PC-9 (cell line): ENCODE measurements at regions of chrX and their contacts with region 1.

Region 1: GRCh38 chrX:47233337-47234113 is 716 bp downstream of the USP11 start:
- DNase-seq: peak; percentile 83 to 85
- H3K4me3 ChIP-seq: peak overlapping the region; percentile 62
- H3K27ac ChIP-seq: peak overlapping the region; percentile 96
- H3K4me1 ChIP-seq: no peaks in the 10 kb centered on the region
- H3K27me3 ChIP-seq: no peaks in the 10 kb centered on the region
- CTCF ChIP-seq: no peak

Region 2: GRCh38 chrX:46029777-46030176 is 1203.7 kb before region 1 on chrX:
- CTCF ChIA-PET with region 1: no interaction called
- POLR2A ChIA-PET with region 1: no interaction called
- intact Hi-C with region 1: no loop called
- DNase-seq: peak in 1 of 2 experiments; percentile 35
- H3K4me3 ChIP-seq: no peak overlapping the region
- H3K27ac ChIP-seq: no peak overlapping the region
- H3K4me1 ChIP-seq: no peaks in the 10 kb centered on the region
- H3K27me3 ChIP-seq: no peaks in the 10 kb centered on the region
- CTCF ChIP-seq: no peak

Region 3: DNA sequence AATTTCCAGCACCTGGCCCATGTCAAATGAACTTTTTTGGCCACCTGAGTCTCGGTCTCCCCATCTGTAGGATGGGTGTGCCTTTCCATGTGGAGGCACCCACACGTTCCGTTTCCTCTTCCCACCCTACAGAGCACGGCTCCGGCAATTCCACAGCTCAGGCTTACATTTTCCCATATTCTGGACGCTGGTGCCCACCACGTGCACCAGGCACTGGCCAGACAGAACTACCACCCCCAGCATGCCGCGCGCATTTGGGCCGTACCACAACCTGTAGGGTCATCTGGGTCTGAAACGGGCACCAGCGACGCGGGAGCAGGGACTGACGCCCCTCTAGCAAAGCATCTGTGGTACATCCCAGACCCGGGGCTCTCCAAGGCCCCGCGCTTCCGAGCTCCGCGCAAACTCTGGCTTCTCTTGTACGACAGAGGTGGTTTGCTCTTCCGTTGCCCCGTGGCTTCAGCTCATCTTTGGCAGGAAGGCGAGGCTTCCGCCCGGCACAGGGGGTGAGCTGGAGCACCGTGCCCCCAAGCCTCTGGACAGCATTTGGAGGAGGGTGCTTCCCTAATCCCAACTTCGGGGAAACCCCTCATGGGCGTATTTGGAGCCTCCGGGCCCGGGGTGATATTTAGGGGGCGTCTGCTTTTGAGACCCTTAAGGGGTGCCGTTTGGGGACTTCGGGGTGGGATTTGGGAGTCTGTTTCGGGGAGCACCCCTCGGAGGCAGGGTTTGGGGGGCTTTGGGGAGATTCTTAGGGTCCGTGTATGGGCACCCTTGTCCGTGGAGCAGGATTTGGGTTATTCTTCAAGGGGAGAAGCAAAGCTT is 42.9 kb before region 1 on chrX:
- CTCF ChIA-PET with region 1: no interaction called
- POLR2A ChIA-PET with region 1: no interaction called
- intact Hi-C with region 1: no loop called
- DNase-seq: peak; percentile 67 to 69
- H3K4me3 ChIP-seq: peak overlapping the region; percentile 59
- H3K27ac ChIP-seq: no peak overlapping the region
- H3K4me1 ChIP-seq: no peaks in the 10 kb centered on the region
- H3K27me3 ChIP-seq: no peaks in the 10 kb centered on the region
- CTCF ChIP-seq: no peak

Region 4: GRCh38 chrX:47264483-47265173 is 31.1 kb after region 1 on chrX:
- CTCF ChIA-PET with region 1: no interaction called
- POLR2A ChIA-PET with region 1: interaction called, 12 read pairs
- intact Hi-C with region 1: no loop called
- DNase-seq: no peak
- H3K4me3 ChIP-seq: no peak overlapping the region
- H3K27ac ChIP-seq: no peak overlapping the region
- H3K4me1 ChIP-seq: no peaks in the 10 kb centered on the region
- H3K27me3 ChIP-seq: no peaks in the 10 kb centered on the region
- CTCF ChIP-seq: no peak

Region 5: GRCh38 chrX:47297871-47298270 is 64.3 kb after region 1 on chrX:
- CTCF ChIA-PET with region 1: no interaction called
- POLR2A ChIA-PET with region 1: no interaction called
- intact Hi-C with region 1: loop called (anchors 5 kb)
- DNase-seq: peak; percentile 62 to 80
- H3K4me3 ChIP-seq: no peak overlapping the region
- H3K27ac ChIP-seq: peak overlapping the region; percentile 94
- H3K4me1 ChIP-seq: peaks cover 22% of the 10 kb centered on the region
- H3K27me3 ChIP-seq: no peaks in the 10 kb centered on the region
- CTCF ChIP-seq: no peak

Region 6: DNA sequence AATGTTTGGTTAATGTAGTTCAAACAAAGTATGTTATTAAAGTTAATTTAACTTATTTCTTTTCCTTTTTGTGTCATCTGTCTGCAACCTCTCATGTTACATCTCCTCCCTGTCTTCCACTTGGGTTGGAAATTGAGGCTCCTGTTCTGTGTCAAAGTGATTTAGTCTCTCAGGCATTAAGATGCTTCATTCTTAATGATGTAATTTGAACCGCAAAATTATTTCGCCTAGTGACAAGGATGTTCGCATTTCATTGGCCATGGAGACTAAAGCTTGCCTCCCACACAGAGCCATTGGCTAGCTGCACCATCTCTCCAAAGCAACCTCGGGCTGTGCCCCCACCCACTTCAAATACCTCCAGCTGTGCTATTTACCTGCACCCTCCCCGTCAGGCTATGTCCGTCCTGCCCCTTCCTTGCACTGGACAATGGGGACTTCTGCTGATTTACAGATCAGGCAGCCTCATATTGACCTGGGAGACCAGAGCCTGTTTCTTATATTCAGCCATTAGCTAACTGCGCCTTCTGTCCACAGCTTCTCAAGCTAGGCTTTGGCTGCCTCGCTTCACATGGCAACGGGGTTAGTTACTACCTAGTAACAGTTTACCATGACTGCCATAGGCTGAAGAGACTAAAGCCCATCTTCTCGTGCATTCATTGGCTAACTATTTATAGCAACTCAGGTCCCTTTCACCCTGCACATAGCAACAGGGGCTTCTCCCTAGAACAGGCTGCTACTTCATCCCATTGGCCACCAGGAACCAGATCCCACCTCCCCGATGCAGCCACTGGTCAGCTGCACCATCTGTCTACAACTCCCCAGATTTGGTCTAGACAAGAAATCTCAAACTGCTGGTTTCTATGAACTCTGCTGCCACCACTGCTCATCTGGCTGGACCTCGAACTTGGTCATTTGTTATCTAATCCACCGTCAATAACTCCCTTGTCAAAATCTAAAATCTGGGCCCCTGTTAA is 128.3 kb after region 1 on chrX:
- CTCF ChIA-PET with region 1: no interaction called
- POLR2A ChIA-PET with region 1: no interaction called
- intact Hi-C with region 1: loop called (anchors 5 kb)
- DNase-seq: peak in 1 of 2 experiments; percentile 59
- H3K4me3 ChIP-seq: no peak overlapping the region
- H3K27ac ChIP-seq: no peak overlapping the region
- H3K4me1 ChIP-seq: no peaks in the 10 kb centered on the region
- H3K27me3 ChIP-seq: no peaks in the 10 kb centered on the region
- CTCF ChIP-seq: no peak

Region 7: DNA sequence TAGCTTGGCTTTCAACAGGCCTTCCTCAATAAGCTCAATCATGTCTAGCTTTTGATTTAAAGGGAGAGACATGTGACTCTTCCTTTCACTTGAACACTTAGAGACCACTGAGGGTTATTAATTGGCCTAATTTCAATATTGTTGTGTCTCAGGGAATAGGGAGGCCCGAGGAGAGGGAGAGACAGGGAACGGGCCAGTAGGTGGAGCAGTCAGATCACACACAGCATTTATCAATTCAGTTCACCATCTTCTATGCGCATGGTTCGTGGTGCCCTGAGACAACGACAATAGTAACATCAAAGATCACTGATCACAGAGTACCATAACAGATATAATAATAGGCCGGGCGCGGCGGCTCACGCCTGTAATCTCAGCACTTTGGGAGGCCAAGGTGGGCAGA is 620.9 kb after region 1 on chrX:
- CTCF ChIA-PET with region 1: no interaction called
- POLR2A ChIA-PET with region 1: no interaction called
- intact Hi-C with region 1: no loop called
- DNase-seq: no peak
- H3K4me3 ChIP-seq: no peak overlapping the region
- H3K27ac ChIP-seq: no peak overlapping the region
- H3K4me1 ChIP-seq: no peaks in the 10 kb centered on the region
- H3K27me3 ChIP-seq: no peaks in the 10 kb centered on the region
- CTCF ChIP-seq: no peak; the same call in 1 of the 2 replicates